ENCODE measurements at regions of chr5 and their contacts with region 1.

Region 1: GRCh38 chr5:112551419-112552032 is 132.4 kb upstream of the EPB41L4A start:
- DNase-seq: peak; percentile 39
- ATAC-seq: peak; percentile 83
- H3K4me3 ChIP-seq: no peak overlapping the region
- H3K27ac ChIP-seq: no peak overlapping the region
- H3K4me1 ChIP-seq: peaks cover 10% of the 10 kb centered on the region; the same call in 1 of the 2 replicates
- H3K27me3 ChIP-seq: no peaks in the 10 kb centered on the region
- CTCF ChIP-seq: peak; percentile 79
- EP300 ChIP-seq: no peak
- POLR2A ChIP-seq: no peak
- RAD21 ChIP-seq: peak; percentile 76

Region 2: DNA sequence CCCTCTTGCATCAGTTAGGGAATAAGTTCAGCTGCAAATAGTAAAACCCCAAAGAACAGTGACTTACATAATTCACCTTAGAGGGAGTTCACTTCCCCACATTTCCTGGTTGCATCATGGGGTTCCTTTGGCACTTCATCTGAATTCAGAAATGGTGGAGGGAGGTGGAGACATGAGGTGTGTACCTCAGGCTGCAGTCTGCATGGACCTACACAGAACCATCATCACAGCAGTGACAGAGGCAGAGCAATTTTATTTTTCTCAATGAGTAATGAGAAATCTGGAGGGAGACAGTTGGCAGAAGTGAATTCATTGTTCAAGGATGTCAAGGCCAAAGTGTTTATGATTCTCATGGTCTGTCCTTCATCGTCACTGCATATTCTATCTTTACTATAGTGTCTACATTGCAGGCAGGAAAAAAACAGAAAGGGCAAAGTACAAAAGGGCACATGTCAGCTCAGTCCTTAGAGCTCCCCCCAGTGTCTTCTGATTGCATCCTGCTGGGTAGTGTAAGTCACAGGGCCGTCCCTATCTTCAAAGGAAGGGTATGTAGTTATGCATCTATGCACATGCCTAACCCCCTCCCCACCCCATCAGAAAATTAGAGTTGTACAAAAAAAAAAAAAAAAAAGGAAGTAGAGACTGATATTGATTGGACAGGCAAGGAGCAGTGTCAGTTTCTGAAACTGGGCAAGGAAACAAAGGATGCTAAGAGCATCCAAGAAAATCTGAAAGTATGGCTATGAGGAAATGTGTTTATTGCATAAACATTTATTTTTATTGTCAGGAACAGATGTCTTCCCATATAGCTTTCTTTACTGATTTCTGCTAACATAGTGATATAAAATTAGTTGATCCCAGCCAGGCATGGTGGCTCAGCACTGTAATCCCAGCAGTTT is 53.5 kb after region 1 on chr5:
- CTCF ChIA-PET with region 1: interaction called, 12 read pairs
- POLR2A ChIA-PET with region 1: no interaction called
- in situ Hi-C with region 1: loop called (anchors 10 kb)
- intact Hi-C with region 1: loop called (anchors 1 kb)
- DNase-seq: peak; percentile 68
- ATAC-seq: peak; percentile 98
- H3K4me3 ChIP-seq: no peak overlapping the region
- H3K27ac ChIP-seq: no peak overlapping the region
- H3K4me1 ChIP-seq: peaks cover 9% of the 10 kb centered on the region
- H3K27me3 ChIP-seq: no peaks in the 10 kb centered on the region
- CTCF ChIP-seq: peak; percentile 76
- EP300 ChIP-seq: 0 out of 4 replicates have a peak, but pooled peaks of 1 of the 2 experiments have one; percentile 24
- POLR2A ChIP-seq: no peak
- RAD21 ChIP-seq: peak; percentile 27; the same call in 1 of the 2 replicates

Region 3: GRCh38 chr5:112757468-112758208 is 206.1 kb after region 1 on chr5:
- CTCF ChIA-PET with region 1: interaction called, 20 read pairs
- POLR2A ChIA-PET with region 1: no interaction called
- in situ Hi-C with region 1: loop called (anchors 5 kb)
- intact Hi-C with region 1: loop called (anchors 1 kb)
- DNase-seq: peak; percentile 61
- ATAC-seq: peak; percentile 85
- H3K4me3 ChIP-seq: no peak overlapping the region
- H3K27ac ChIP-seq: no peak overlapping the region
- H3K4me1 ChIP-seq: no peaks in the 10 kb centered on the region
- H3K27me3 ChIP-seq: no peaks in the 10 kb centered on the region
- CTCF ChIP-seq: peak; percentile 72
- EP300 ChIP-seq: no peak
- POLR2A ChIP-seq: no peak
- RAD21 ChIP-seq: 0 out of 2 replicates have a peak, but pooled peaks have one; percentile 36

Region 4: DNA sequence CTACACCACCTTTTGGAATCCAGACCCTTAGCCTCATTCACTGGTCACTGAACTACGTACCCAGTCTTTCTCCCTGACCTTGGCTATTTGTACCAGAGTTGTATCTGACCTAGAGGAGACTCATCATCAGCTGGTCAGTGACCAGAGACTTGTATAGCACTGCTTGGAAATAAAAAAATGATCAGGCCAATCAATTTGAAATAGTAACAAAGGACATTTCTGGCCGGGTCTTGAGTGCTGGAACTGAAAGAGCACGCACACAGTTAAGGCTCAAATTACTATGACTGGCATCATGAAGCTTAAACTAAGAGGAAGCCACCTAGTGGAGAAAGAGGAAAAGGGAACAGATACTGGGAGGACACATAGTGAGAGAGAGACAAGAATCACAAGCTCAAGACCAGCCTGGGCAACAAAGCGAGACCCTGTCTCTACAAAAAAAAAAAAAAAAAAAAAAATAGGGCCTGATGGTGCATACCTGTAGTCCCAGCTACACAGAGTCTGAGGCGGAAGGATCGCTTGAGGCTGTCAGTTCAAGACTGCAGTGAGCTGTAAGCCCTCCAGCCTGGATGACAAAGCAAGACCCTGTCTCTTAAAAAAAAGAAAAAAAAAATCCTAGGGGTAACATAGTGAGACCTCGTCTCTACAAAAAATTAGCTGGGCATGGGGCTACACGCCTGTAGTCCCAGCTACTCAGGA is 296.7 kb after region 1 on chr5:
- CTCF ChIA-PET with region 1: interaction called, 4 read pairs
- POLR2A ChIA-PET with region 1: no interaction called
- in situ Hi-C with region 1: loop called (anchors 5 kb)
- intact Hi-C with region 1: loop called (anchors 2 kb)
- DNase-seq: peak; percentile 76
- ATAC-seq: peak; percentile 99
- H3K4me3 ChIP-seq: peak overlapping the region in 1 of 3 experiments; percentile 39; a peak in 1 of 6 replicates
- H3K27ac ChIP-seq: no peak overlapping the region
- H3K4me1 ChIP-seq: peaks cover 16% of the 10 kb centered on the region
- H3K27me3 ChIP-seq: no peaks in the 10 kb centered on the region
- CTCF ChIP-seq: peak; percentile 78
- EP300 ChIP-seq: no peak
- POLR2A ChIP-seq: no peak
- RAD21 ChIP-seq: no peak